Stomach (tissue), 19 donors: ENCODE measurements at regions of chr10 and their contacts with region 1.

Region 1: DNA sequence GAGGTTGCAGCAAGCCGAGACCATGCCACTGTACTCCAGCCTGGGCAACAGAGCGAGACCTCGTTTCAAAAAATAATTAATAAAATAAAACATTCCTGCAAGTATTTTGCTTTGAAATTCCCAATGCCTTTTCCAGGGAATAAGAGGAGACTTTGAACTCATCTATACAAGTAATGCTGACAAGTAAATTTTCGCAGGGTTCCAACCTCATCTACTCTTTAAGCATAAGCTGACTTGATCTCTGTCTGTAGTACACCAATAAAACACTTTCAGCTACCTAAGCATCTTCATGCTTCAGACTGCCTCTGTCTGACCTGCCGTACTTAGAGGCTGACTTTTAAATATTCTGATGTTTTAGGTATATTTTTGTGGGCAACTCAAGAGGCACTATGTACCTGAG is 13.7 kb upstream of the BEND7 start:
- DNase-seq: no peak
- H3K4me3 ChIP-seq: no peak overlapping the region
- H3K27ac ChIP-seq: no peak overlapping the region
- H3K4me1 ChIP-seq: no peaks in the 10 kb centered on the region
- H3K27me3 ChIP-seq: peaks cover 0 to 52% (median 0%) of the 10 kb centered on the region in 3 donors
- CTCF ChIP-seq: no peak
- EP300 ChIP-seq: no peak
- POLR2A ChIP-seq: no peak

Region 2: DNA sequence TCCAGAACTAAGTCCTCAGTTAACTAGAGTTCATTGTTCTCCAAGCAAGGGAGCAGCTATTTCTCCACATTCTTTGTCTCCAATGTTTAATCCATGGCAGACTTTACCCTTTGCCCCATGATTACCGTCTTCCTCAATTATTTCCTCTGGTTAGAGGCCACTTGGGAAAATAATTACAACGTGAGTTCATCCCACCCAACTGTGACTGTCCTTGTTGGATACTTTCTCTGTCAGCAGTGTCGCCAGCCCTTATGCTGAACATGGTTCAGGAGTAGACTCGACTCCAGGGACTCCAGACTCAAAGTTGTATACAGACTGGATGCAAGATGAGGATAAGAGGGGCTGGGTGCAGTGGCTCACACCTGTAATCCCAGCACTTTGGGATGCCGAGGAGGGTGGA is 177.3 kb before region 1 on chr10:
- intact Hi-C with region 1: loop called (anchors 10 kb)
- DNase-seq: no peak
- H3K4me3 ChIP-seq: no peak overlapping the region
- H3K27ac ChIP-seq: no peak overlapping the region
- H3K4me1 ChIP-seq: no peaks in the 10 kb centered on the region
- H3K27me3 ChIP-seq: no peaks in the 10 kb centered on the region
- CTCF ChIP-seq: no peak
- EP300 ChIP-seq: no peak
- POLR2A ChIP-seq: no peak